WTC11 (cell line): ENCODE measurements at regions of chr3 and their contacts with region 1.

Region 1: GRCh38 chr3:146469150-146470017 is at the start of gene PLSCR2:
- DNase-seq: peak; percentile 86
- ATAC-seq: peak; percentile 98
- H3K4me3 Mint-ChIP-seq: peak within 1 kb of the TSS; percentile 65
- H3K27ac Mint-ChIP-seq: peak within 1 kb of the TSS; percentile 85
- H3K4me1 Mint-ChIP-seq: peaks cover 15% of the 10 kb centered on the region
- H3K27me3 Mint-ChIP-seq: no peaks in the 10 kb centered on the region
- CTCF ChIP-seq: no peak
- total RNA-seq, gene PLSCR2: 0.18 to 0.39 TPM (median 0.23 TPM) in 3 replicates

Region 2: GRCh38 chr3:146404436-146404835 is 64.9 kb before region 1 on chr3:
- CTCF ChIA-PET with region 1: no interaction called
- POLR2A ChIA-PET with region 1: no interaction called
- DNase-seq: no peak
- ATAC-seq: no peak
- H3K4me3 Mint-ChIP-seq: no peak overlapping the region
- H3K27ac Mint-ChIP-seq: no peak overlapping the region
- H3K4me1 Mint-ChIP-seq: peaks cover 27% of the 10 kb centered on the region
- H3K27me3 Mint-ChIP-seq: peaks cover 31% of the 10 kb centered on the region
- CTCF ChIP-seq: no peak

Region 3: GRCh38 chr3:146544002-146544928 is 74.9 kb after region 1 on chr3 and contains the start of gene PLSCR1:
- CTCF ChIA-PET with region 1: interaction called, 7 read pairs
- POLR2A ChIA-PET with region 1: interaction called, 11 read pairs
- DNase-seq: peak; percentile 86
- ATAC-seq: peak; percentile 91
- H3K4me3 Mint-ChIP-seq: peak within 1 kb of the TSS; percentile 86
- H3K27ac Mint-ChIP-seq: peak within 1 kb of the TSS; percentile 77; the same call in 1 of the 2 replicates
- H3K4me1 Mint-ChIP-seq: peaks cover 36% of the 10 kb centered on the region
- H3K27me3 Mint-ChIP-seq: peaks cover 7% of the 10 kb centered on the region
- CTCF ChIP-seq: no peak
- total RNA-seq, gene PLSCR1: 44.4 to 58.1 TPM (median 48.1 TPM) in 3 replicates